HEK293 (cell line): ENCODE measurements at regions of chr7 and their contacts with region 1.

Region 1: GRCh38 chr7:154953006-154953684 is 49.8 kb downstream of the PAXIP1 start:
- H3K4me3 ChIP-seq: no peak overlapping the region
- H3K27ac ChIP-seq: no peak overlapping the region
- H3K4me1 ChIP-seq: no peaks in the 10 kb centered on the region
- CTCF ChIP-seq: peak; percentile 36; the same call in 1 of the 2 replicates

Region 2: DNA sequence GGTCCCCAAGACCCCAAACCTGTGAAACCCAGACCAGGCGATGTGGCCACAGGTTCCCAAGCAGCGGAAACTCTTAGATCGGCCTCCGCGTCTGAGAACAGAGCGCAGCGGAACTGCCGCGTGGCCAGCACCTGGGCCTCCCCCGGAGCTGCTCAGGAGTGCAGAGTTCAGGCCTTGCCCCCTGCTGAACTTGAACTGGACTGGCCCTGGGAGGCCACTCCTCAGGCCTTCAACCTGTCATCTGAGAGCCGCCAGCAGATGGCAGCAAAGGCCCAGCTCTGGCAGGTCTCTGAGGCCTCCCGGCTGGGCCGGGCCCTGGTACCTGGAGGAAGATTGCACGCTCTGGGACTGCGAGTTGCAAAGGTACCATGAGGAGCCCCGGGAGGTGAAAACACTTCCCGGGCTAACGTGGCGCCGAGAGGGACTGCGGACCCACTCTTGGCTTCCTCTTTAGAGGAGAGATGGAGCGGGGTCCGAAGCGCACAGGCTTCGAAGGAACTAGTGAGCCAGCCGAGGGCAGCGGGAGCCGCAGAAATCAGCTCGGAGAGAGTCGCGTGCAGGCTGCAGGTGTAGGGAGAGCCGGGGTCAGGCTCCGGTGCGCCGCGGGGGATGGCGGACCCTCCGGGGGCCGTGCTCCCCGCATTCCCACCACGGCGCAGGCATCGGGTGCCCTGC is 39.4 kb before region 1 on chr7:
- CTCF ChIA-PET with region 1: interaction called, 20 read pairs
- POLR2A ChIA-PET with region 1: no interaction called
- H3K4me3 ChIP-seq: no peak overlapping the region
- H3K27ac ChIP-seq: no peak overlapping the region
- H3K4me1 ChIP-seq: no peaks in the 10 kb centered on the region
- CTCF ChIP-seq: peak; percentile 67

Region 3: DNA sequence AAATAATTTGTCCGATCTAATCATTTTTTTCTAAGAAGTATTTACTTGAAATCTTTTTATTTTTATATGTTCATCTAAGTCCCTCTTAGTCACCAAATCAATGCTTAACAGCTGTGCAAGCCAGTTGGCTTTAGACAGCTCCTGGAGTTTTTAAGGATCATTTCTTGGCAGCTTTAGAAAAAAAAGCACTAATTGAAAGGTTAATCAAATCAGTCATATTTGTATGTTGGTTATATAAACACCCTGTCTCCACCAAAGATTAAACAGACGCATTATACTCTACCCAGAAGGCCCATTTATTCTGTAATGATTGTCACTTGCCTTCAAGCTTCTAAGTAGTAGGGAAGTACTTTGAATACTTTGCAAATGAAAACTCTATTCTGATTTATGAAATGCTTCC is 10.5 kb before region 1 on chr7:
- CTCF ChIA-PET with region 1: interaction called, 27 read pairs
- POLR2A ChIA-PET with region 1: no interaction called
- H3K4me3 ChIP-seq: no peak overlapping the region
- H3K27ac ChIP-seq: no peak overlapping the region
- H3K4me1 ChIP-seq: no peaks in the 10 kb centered on the region
- CTCF ChIP-seq: no peak

Region 4: GRCh38 chr7:154975984-154976383 is 22.8 kb after region 1 on chr7:
- CTCF ChIA-PET with region 1: interaction called, 10 read pairs
- POLR2A ChIA-PET with region 1: no interaction called
- H3K4me3 ChIP-seq: no peak overlapping the region
- H3K27ac ChIP-seq: no peak overlapping the region
- H3K4me1 ChIP-seq: no peaks in the 10 kb centered on the region
- CTCF ChIP-seq: no peak